Activated CD4-positive, alpha-beta memory T cell treated with anti-CD3 and anti-CD28 coated beads for 36 hours (primary cell): ENCODE measurements at regions of chr15 and their contacts with region 1.

Region 1: GRCh38 chr15:100448492-100448891 is 80.3 kb downstream of the CERS3 start:
- DNase-seq: no peak
- H3K4me3 Mint-ChIP-seq: no peak overlapping the region
- H3K27ac Mint-ChIP-seq: no peak overlapping the region
- H3K4me1 Mint-ChIP-seq: no peaks in the 10 kb centered on the region
- H3K27me3 Mint-ChIP-seq: no peaks in the 10 kb centered on the region

Region 2: DNA sequence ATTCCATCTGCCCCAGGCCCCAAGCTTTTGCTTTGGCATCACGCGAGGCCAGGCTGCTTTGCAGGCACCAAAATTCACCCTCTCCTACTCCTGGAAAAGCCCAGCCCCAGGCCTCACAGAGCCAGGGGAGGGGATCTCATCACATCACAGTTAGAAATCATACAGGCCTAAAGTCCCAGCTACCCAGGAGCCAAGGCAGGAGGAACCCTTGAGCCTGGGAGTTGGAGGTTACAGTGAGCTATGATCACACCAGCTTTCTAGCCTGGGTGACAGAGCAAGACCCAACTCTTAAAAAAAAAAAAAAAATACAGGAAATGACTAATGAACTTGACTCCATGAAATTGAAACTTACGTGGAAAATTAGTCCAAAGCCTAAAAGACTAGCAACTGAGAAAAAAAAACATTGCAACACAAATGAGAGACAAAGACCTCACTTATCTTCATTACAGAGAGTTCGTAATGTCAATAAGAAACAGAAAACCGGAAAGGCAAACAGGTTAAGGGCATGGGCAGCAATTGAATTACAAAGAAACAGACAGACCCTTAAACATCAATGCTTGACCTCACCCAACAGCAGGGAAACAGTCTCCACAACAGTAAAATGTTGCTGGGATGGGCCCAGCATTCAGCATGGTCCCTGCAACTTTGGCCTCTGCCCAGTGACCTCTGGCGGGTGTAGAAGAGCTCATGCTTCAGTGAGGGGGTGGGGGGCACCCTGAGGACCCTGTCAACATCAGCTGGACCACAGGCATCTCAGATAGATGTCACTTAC is 622.2 kb after region 1 on chr15:
- CTCF ChIA-PET with region 1: no interaction called
- POLR2A ChIA-PET with region 1: no interaction called
- intact Hi-C with region 1: loop called (anchors 10 kb)
- DNase-seq: no peak
- H3K4me3 Mint-ChIP-seq: no peak overlapping the region
- H3K27ac Mint-ChIP-seq: peak overlapping the region; percentile 66
- H3K4me1 Mint-ChIP-seq: peaks cover 11% of the 10 kb centered on the region
- H3K27me3 Mint-ChIP-seq: peaks cover 1% of the 10 kb centered on the region